Activated CD8-positive, alpha-beta T cell treated with anti-CD3 and anti-CD28 coated beads for 36 hours (primary cell): ENCODE measurements at regions of chr1 and their contacts with region 1.

Region 1: GRCh38 chr1:107782217-107782845 is 182.6 kb downstream of the VAV3 start:
- DNase-seq: peak; percentile 48
- ATAC-seq: no peak
- H3K4me3 Mint-ChIP-seq: no peak overlapping the region
- H3K27ac Mint-ChIP-seq: no peak overlapping the region
- H3K4me1 Mint-ChIP-seq: peaks cover 29% of the 10 kb centered on the region
- H3K27me3 Mint-ChIP-seq: no peaks in the 10 kb centered on the region
- CTCF ChIP-seq: peak; percentile 82

Region 2: GRCh38 chr1:107795994-107796393 is 13.7 kb after region 1 on chr1:
- CTCF ChIA-PET with region 1: interaction called, 18 read pairs
- POLR2A ChIA-PET with region 1: no interaction called
- intact Hi-C with region 1: no loop called
- DNase-seq: peak; percentile 51
- ATAC-seq: peak; percentile 73
- H3K4me3 Mint-ChIP-seq: no peak overlapping the region
- H3K27ac Mint-ChIP-seq: peak overlapping the region; percentile 67
- H3K4me1 Mint-ChIP-seq: peaks cover 44% of the 10 kb centered on the region
- H3K27me3 Mint-ChIP-seq: no peaks in the 10 kb centered on the region
- CTCF ChIP-seq: no peak

Region 3: GRCh38 chr1:107817935-107818334 is 35.6 kb after region 1 on chr1:
- CTCF ChIA-PET with region 1: no interaction called
- POLR2A ChIA-PET with region 1: no interaction called
- intact Hi-C with region 1: no loop called
- DNase-seq: no peak
- ATAC-seq: no peak
- H3K4me3 Mint-ChIP-seq: no peak overlapping the region
- H3K27ac Mint-ChIP-seq: no peak overlapping the region
- H3K4me1 Mint-ChIP-seq: peaks cover 44% of the 10 kb centered on the region
- H3K27me3 Mint-ChIP-seq: no peaks in the 10 kb centered on the region
- CTCF ChIP-seq: no peak

Region 4: GRCh38 chr1:107862064-107862463 is 79.7 kb after region 1 on chr1:
- CTCF ChIA-PET with region 1: no interaction called
- POLR2A ChIA-PET with region 1: no interaction called
- intact Hi-C with region 1: no loop called
- DNase-seq: no peak
- ATAC-seq: peak; percentile 47
- H3K4me3 Mint-ChIP-seq: no peak overlapping the region
- H3K27ac Mint-ChIP-seq: no peak overlapping the region
- H3K4me1 Mint-ChIP-seq: peaks cover 26% of the 10 kb centered on the region
- H3K27me3 Mint-ChIP-seq: no peaks in the 10 kb centered on the region
- CTCF ChIP-seq: no peak

Region 5: DNA sequence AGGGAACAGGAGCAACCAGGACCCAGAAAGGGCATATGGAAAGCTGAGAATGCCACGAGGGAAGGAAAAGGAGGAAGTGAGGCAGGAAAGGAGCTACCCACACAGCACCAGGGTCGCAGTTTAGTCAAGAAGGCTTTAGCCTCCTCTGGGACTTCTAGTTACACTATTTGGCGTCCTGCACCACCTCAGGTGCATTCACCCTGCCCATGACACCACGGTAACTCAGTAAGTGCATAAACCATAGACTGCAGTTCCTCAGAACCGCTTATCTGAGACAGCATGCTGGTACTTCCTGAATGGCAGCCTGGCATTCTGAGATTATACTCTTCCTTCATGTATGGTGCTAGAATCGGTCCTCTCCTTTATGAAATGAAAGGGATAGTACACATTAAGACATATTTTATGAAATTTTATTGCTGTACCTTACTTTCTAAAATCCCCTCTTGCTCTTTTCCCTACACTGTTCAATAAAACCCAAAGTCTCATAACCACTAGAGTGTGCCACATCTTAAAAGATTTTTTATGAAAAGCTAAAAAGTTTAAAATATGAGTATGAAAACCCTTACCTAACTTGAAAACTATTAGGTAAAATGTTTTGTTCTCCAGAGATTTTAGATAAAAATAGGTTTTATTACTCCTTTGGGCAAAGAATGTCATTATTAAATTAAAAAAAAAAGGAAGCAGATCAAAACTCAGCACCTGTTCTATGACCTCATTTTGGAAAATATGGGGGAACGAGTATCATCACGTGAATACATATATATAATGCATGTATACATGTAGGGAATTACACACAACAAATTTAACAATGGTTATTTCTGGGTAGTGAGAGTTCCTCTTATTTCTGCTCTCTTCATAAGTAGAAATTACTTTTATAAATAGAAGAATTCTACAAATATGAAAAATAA is 115.4 kb after region 1 on chr1:
- CTCF ChIA-PET with region 1: interaction called, 3 read pairs
- POLR2A ChIA-PET with region 1: no interaction called
- intact Hi-C with region 1: loop called (anchors 10 kb)
- DNase-seq: peak; percentile 20
- ATAC-seq: peak; percentile 76
- H3K4me3 Mint-ChIP-seq: peak overlapping the region; percentile 43
- H3K27ac Mint-ChIP-seq: peak overlapping the region; percentile 74
- H3K4me1 Mint-ChIP-seq: peaks cover 57% of the 10 kb centered on the region
- H3K27me3 Mint-ChIP-seq: no peaks in the 10 kb centered on the region
- CTCF ChIP-seq: peak; percentile 18

Region 6: GRCh38 chr1:107936498-107937481 is 154.5 kb after region 1 on chr1:
- CTCF ChIA-PET with region 1: interaction called, 3 read pairs
- POLR2A ChIA-PET with region 1: no interaction called
- intact Hi-C with region 1: loop called (anchors 10 kb)
- DNase-seq: peak; percentile 82
- ATAC-seq: peak; percentile 48
- H3K4me3 Mint-ChIP-seq: peak overlapping the region; percentile 44
- H3K27ac Mint-ChIP-seq: peak overlapping the region; percentile 70
- H3K4me1 Mint-ChIP-seq: peaks cover 86% of the 10 kb centered on the region
- H3K27me3 Mint-ChIP-seq: no peaks in the 10 kb centered on the region
- CTCF ChIP-seq: no peak

Region 7: GRCh38 chr1:107963601-107964335 is 181.4 kb after region 1 on chr1:
- CTCF ChIA-PET with region 1: interaction called, 23 read pairs
- POLR2A ChIA-PET with region 1: interaction called, 9 read pairs
- intact Hi-C with region 1: loop called (anchors 5 kb)
- DNase-seq: peak; percentile 70
- ATAC-seq: peak; percentile 74
- H3K4me3 Mint-ChIP-seq: peak overlapping the region; percentile 93
- H3K27ac Mint-ChIP-seq: peak overlapping the region; percentile 98
- H3K4me1 Mint-ChIP-seq: peaks cover 32% of the 10 kb centered on the region
- H3K27me3 Mint-ChIP-seq: no peaks in the 10 kb centered on the region
- CTCF ChIP-seq: no peak

Region 8: DNA sequence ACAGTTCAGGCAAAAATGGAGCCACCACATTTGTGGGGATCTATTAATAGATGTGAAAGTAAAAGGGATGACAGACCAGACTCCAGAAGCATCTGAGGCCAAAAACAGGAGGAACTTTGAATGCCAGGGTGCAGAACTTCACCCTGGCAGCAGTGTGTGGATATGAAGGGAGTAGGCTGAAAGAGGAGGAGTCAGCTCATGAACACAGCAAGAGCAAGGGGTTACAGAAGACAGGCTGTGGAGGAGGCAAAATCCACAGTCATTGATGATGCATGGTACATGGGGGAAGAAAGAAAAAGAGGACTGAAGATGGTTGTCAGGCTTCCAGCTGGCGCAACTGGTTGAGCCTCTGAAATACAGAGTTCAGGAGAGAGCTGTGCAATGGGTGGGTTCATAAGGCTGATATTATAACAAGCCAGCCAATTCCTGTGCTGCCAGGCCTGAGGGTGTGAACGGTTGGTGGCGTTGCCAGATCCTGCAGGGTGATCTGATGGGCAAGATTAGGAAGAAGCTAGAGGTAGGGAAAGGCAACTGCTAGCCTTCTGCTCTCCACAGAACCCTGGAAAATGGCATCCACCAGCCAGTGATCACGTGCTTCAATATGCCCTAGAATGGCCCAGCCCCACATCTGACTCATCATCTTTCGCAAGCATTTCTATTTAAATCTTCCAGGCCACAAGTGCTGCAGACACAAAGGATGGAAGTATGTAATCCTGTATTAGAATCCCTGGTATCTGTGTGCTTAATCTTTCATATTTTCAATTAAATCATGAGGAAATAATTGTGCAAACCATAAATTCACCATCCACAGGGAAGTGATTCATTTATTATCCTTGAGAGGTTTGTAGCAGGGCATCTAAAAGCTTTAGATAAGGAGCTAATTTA is 335.9 kb after region 1 on chr1:
- CTCF ChIA-PET with region 1: interaction called, 350 read pairs
- POLR2A ChIA-PET with region 1: interaction called, 4 read pairs
- intact Hi-C with region 1: no loop called
- DNase-seq: peak; percentile 11
- ATAC-seq: no peak
- H3K4me3 Mint-ChIP-seq: no peak overlapping the region
- H3K27ac Mint-ChIP-seq: no peak overlapping the region
- H3K4me1 Mint-ChIP-seq: peaks cover 11% of the 10 kb centered on the region
- H3K27me3 Mint-ChIP-seq: no peaks in the 10 kb centered on the region
- CTCF ChIP-seq: no peak

Region 9: GRCh38 chr1:108125312-108126138 is 343.2 kb after region 1 on chr1:
- CTCF ChIA-PET with region 1: interaction called, 350 read pairs
- POLR2A ChIA-PET with region 1: interaction called, 5 read pairs
- intact Hi-C with region 1: loop called (anchors 1 kb)
- DNase-seq: peak; percentile 74
- ATAC-seq: peak; percentile 99
- H3K4me3 Mint-ChIP-seq: no peak overlapping the region
- H3K27ac Mint-ChIP-seq: no peak overlapping the region
- H3K4me1 Mint-ChIP-seq: peaks cover 3% of the 10 kb centered on the region
- H3K27me3 Mint-ChIP-seq: no peaks in the 10 kb centered on the region
- CTCF ChIP-seq: peak; percentile 89